ENCODE measurements at regions of chr17 and their contacts with region 1.

Region 1: GRCh38 chr17:18183334-18184142 is at the start of gene ALKBH5:
- DNase-seq: peak; percentile 96
- H3K4me3 Mint-ChIP-seq: peak within 1 kb of the TSS; percentile 97
- H3K27ac Mint-ChIP-seq: peak within 1 kb of the TSS; percentile 98
- H3K4me1 Mint-ChIP-seq: peaks cover 56% of the 10 kb centered on the region
- H3K27me3 Mint-ChIP-seq: no peaks in the 10 kb centered on the region
- total RNA-seq, gene ALKBH5: 164 and 165 TPM in 2 replicates

Region 2: DNA sequence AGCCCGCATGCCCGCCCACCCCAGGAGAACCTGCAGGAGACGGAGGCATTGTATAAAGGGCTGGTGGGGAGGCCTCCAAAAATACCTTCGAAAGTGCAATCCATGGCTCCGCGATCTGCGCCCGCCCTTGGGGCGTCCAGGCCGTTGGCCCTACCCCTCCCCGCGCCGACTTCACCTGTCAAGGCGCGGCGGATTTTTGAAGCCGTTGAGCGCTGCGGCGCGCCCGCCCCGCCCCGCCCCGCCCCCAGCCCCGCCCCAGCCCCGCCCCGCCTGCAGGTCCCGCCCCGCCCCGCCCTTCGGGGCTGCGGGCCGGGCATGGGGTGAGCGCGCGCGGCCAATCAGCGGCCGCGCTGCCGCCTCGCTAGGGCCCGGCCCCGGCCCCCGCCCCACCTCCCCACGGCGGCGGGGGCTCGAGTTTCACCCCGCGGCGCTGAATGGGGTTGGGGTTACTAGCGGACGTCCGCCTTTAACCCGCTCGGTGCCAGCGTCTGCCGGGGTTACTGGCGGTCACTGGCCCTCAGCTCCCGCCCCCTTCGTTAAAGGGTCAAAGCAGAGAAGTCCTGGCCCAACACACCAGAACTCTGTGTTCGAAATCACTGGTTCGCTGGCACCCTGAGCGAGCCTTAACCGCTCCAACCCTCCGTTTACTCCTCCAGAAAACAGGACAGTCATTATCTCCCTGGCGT is 360.0 kb before region 1 on chr17:
- intact Hi-C with region 1: loop called (anchors 10 kb)
- DNase-seq: peak; percentile 82
- H3K4me3 Mint-ChIP-seq: peak overlapping the region; percentile 77
- H3K27ac Mint-ChIP-seq: peak overlapping the region; percentile 94
- H3K4me1 Mint-ChIP-seq: peaks cover 81% of the 10 kb centered on the region
- H3K27me3 Mint-ChIP-seq: no peaks in the 10 kb centered on the region

Region 3: DNA sequence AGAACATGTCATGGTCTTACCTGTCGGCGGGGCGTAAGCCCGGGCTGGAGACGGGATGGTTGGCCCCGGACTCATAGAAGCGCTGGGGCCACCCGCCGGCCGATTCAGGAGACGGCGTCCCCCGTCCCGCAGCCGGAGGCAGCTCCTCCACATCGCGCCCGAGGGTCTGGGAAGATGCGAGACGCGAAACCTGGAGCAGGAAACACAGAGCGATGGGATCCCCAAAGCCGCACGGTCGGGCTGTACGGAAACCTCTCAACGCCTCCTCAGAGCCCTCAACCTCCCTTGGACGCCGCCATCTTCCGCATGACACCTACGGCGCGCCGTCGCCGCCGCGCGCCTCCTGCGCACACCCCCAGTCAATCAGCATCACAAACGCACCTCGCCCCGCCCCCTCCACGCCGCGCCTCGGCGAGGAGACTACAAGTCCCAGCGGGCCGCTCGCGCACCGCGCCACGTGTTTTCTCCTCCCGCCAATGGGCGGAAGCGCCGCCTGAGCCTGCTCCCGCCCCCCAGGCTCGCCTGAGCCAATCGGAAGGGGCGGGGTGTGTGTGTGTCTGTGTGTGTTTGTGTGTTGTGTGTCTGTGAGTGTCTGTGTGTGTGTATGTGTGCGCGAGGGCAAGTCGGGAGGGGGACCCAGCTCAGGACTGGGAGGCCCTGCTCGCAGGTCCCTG is 144.5 kb before region 1 on chr17 and contains the starts of genes ATPAF2 and GID4:
- intact Hi-C with region 1: loop called (anchors 10 kb)
- DNase-seq: peak; percentile 100
- H3K4me3 Mint-ChIP-seq: peak within 1 kb of the TSS; percentile 92
- H3K27ac Mint-ChIP-seq: peak within 1 kb of the TSS; percentile 87
- H3K4me1 Mint-ChIP-seq: peaks cover 34% of the 10 kb centered on the region
- H3K27me3 Mint-ChIP-seq: no peaks in the 10 kb centered on the region
- total RNA-seq, gene ATPAF2: 29.9 and 31.3 TPM in 2 replicates
- total RNA-seq, gene GID4: 9.3 and 10.8 TPM in 2 replicates

Region 4: DNA sequence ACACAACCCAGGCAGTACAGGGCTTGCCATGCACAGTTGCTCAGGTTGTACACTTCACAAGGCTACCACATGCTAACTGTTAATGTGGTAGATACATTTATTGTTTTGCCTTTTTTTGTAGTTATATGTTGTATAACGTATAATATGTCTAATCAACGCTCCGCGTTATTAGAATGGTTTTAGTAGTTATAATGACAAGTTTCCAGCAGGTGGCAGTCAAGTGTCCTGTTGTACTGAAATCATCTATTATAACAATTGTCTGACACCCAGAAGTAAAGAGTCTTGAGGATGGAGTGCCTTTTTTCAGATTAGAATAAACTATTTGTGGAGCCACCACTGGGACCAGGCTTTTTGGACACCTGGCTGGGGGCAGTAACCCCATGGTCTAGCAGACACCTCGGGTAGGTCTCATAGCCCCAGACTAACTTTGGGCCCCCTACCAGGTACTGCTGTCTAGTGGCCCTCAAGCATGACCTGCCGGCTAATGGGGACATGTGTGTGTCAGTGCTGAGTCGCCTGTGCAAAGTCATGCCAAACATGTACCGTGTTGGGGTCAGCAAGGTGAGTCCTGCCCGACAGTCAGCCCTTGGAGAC is 42.2 kb before region 1 on chr17:
- intact Hi-C with region 1: loop called (anchors 1 kb)
- DNase-seq: no peak
- H3K4me3 Mint-ChIP-seq: no peak overlapping the region
- H3K27ac Mint-ChIP-seq: no peak overlapping the region
- H3K4me1 Mint-ChIP-seq: peaks cover 3% of the 10 kb centered on the region
- H3K27me3 Mint-ChIP-seq: no peaks in the 10 kb centered on the region

Region 5: DNA sequence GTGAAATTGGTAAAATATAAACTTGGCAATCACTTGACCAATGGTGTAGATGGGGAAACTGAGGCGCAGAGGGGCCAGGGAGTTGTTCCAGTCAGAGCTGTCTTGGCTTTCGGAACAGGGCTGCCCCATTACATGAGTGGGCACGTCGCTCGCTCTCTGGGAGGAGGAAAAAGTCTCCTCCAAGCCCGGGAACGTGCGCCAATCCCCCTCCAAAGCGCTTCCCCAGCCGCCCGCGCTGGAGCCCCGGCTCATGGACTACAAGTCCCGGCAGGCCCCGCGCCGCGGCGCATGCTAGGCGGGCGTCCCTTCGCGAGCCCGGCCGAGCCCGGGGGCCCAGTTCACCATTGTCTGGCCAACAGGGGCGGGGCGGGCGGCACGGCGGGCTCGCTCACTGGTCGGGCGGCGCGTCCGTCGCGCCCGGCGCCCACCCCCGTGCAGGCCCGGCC is 41.6 kb after region 1 on chr17:
- intact Hi-C with region 1: loop called (anchors 1 kb)
- DNase-seq: peak; percentile 93
- H3K4me3 Mint-ChIP-seq: peak overlapping the region; percentile 70
- H3K27ac Mint-ChIP-seq: no peak overlapping the region
- H3K4me1 Mint-ChIP-seq: peaks cover 17% of the 10 kb centered on the region
- H3K27me3 Mint-ChIP-seq: no peaks in the 10 kb centered on the region

Region 6: DNA sequence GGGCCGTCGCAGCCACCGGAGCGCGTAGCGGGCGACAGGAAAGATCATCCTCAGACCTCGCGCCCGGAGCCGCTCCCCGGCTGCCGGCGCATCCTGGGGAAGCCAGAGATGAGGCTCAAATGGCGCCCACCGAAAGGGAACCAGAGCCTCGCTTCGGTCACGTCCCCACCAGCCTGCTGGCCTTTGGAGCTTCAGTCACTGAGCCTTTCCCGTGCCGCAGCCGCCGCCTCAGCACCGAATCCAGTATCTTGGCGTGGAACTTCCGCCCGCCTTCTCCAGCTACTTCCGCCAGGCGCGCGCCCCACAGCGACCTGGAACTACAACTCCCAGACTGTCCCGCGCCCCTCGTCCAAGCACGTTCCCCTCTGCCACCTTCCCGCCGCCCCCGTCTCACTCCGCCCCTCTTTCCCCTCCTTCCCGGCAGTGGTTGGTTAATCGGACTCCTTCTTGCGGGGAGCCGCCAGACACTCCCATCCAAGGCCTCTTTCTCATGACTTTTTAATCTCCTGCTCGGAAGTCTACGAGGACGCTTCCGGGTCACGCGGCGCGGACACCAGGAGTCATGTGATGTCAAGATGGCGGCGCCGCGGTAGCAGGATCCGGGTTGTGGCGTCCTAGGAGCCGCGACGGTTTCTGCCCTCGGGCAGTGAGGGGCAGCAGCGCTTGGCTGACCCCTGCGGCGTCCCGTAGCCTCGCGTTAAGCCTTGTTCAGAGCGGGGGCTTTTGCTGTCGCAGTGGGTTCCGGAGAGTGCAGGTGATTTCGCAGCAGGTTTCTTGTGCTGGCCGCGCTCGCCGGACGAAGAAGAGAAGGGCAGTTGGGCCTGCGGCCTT is 131.4 kb after region 1 on chr17 and contains the starts of genes SMCR8 and TOP3A:
- intact Hi-C with region 1: loop called (anchors 10 kb)
- DNase-seq: peak; percentile 98
- H3K4me3 Mint-ChIP-seq: peak within 1 kb of the TSS; percentile 94
- H3K27ac Mint-ChIP-seq: peak within 1 kb of the TSS; percentile 100
- H3K4me1 Mint-ChIP-seq: peaks cover 61% of the 10 kb centered on the region
- H3K27me3 Mint-ChIP-seq: no peaks in the 10 kb centered on the region
- total RNA-seq, gene SMCR8: 16.5 and 16.8 TPM in 2 replicates
- total RNA-seq, gene TOP3A: 70.7 and 75.0 TPM in 2 replicates

Region 7: GRCh38 chr17:18332909-18333489 is 149.5 kb after region 1 on chr17:
- intact Hi-C with region 1: no loop called
- DNase-seq: no peak
- H3K4me3 Mint-ChIP-seq: no peak overlapping the region
- H3K27ac Mint-ChIP-seq: no peak overlapping the region
- H3K4me1 Mint-ChIP-seq: peaks cover 14% of the 10 kb centered on the region
- H3K27me3 Mint-ChIP-seq: no peaks in the 10 kb centered on the region

Measured in activated T-helper 2 cell treated with anti-CD3 and anti-CD28 coated beads, Interferon-gamma antibody, Interleukin-2, Interleukin-4, amounts not matched to agents 10 μg/mL and 5 μg/mL and 100 μg/mL, durations not matched to agents 14 hours and 24 hours and 36 hours (primary cell).